ENCODE measurements at regions of chr21 and their contacts with region 1.

Region 1: GRCh38 chr21:16851054-16851453 is 661.8 kb upstream of the CXADR start:
- DNase-seq: no peak
- ATAC-seq: no peak
- H3K4me3 ChIP-seq: no peak overlapping the region
- H3K4me3 Mint-ChIP-seq: no peak overlapping the region
- H3K27ac ChIP-seq: no peak overlapping the region
- H3K27ac Mint-ChIP-seq: no peak overlapping the region
- H3K4me1 ChIP-seq: no peaks in the 10 kb centered on the region
- H3K4me1 Mint-ChIP-seq: no peaks in the 10 kb centered on the region
- H3K27me3 ChIP-seq: no peaks in the 10 kb centered on the region
- H3K27me3 Mint-ChIP-seq: no peaks in the 10 kb centered on the region

Region 2: DNA sequence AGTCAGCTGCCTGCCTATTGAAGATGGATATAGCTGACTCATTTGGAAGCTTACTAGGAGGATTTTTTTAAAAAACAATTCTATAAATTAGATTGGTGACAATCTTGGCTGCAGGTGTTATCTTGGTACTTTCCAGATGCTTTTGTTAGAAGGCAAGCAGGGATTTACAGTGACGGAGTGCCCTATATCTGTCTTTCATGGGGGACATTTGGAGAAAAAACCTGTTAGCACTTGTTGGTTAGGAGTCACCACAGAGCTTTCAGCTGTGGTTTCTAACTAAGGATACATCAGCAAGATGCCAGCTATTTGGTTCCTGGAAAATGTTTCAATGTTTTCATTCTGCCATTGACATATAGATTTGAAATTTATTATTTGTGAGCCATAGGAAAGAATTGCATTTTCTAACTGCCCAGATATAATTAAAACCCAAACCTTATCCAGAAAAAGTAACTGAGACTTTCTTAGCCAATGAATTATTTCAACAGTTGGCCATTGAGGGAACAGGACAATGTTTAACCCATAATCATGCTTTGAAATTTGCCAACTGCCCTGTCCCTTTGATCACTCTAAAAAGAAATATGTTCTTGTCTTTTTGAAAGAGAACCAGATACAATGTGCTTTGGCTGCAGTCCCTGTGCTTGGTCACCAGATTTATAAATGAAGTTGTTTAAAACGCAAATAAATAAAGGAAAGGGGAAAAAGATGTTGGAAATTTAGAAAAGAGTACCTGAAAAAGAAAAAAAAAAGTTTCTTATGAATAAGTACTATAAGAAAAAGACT is 99.2 kb before region 1 on chr21:
- CTCF ChIA-PET with region 1: no interaction called
- POLR2A ChIA-PET with region 1: no interaction called
- DNase-seq: no peak
- ATAC-seq: no peak
- H3K4me3 ChIP-seq: no peak overlapping the region
- H3K4me3 Mint-ChIP-seq: no peak overlapping the region
- H3K27ac ChIP-seq: no peak overlapping the region
- H3K27ac Mint-ChIP-seq: no peak overlapping the region
- H3K4me1 ChIP-seq: no peaks in the 10 kb centered on the region
- H3K4me1 Mint-ChIP-seq: no peaks in the 10 kb centered on the region
- H3K27me3 ChIP-seq: no peaks in the 10 kb centered on the region
- H3K27me3 Mint-ChIP-seq: no peaks in the 10 kb centered on the region

Region 3: GRCh38 chr21:16870103-16870502 is 19.0 kb after region 1 on chr21:
- CTCF ChIA-PET with region 1: no interaction called
- POLR2A ChIA-PET with region 1: interaction called in 1 of 2 experiments, 11 read pairs
- DNase-seq: no peak
- ATAC-seq: no peak
- H3K4me3 ChIP-seq: no peak overlapping the region
- H3K4me3 Mint-ChIP-seq: no peak overlapping the region
- H3K27ac ChIP-seq: no peak overlapping the region
- H3K27ac Mint-ChIP-seq: no peak overlapping the region
- H3K4me1 ChIP-seq: no peaks in the 10 kb centered on the region
- H3K4me1 Mint-ChIP-seq: no peaks in the 10 kb centered on the region
- H3K27me3 ChIP-seq: no peaks in the 10 kb centered on the region
- H3K27me3 Mint-ChIP-seq: no peaks in the 10 kb centered on the region

Region 4: GRCh38 chr21:16983420-16983819 is 132.4 kb after region 1 on chr21:
- CTCF ChIA-PET with region 1: no interaction called
- POLR2A ChIA-PET with region 1: no interaction called
- DNase-seq: no peak
- ATAC-seq: no peak
- H3K4me3 ChIP-seq: no peak overlapping the region
- H3K4me3 Mint-ChIP-seq: no peak overlapping the region
- H3K27ac ChIP-seq: no peak overlapping the region
- H3K27ac Mint-ChIP-seq: no peak overlapping the region
- H3K4me1 ChIP-seq: no peaks in the 10 kb centered on the region
- H3K4me1 Mint-ChIP-seq: no peaks in the 10 kb centered on the region
- H3K27me3 ChIP-seq: no peaks in the 10 kb centered on the region
- H3K27me3 Mint-ChIP-seq: no peaks in the 10 kb centered on the region